ENCODE measurements at regions of chr2 and their contacts with region 1.

Region 1: DNA sequence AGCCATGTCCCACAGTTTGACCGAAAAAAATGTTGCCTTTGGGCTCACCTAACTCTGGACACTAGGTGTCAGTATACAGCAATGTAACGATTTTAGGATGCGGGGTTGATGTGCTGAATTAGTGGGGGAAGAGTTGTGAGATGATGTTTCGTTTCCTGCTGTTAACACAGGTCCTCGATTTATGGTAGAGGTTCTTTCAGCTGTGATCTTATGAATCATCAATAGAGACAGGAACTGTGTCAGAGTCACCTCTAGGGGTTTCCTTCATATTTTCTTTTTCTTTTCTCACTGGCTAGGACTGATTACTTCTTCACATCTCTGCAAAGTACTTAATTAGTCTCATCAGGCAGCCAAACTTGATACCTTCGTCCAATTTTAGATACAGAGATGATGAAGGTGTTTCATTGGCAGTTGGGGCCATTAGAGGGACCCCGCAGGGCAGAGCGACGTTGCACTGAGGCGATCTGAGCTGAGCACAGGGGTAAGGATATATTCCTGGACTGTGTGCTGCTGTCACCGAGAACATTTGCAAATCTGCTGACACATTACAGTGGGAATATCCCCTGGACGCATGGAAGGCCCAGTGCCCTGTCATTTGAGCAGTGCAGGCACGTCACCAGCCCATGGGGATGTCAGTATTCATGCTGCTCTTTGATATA is 10.2 kb upstream of the MMADHC start:
- DNase-seq: no peak

Region 2: DNA sequence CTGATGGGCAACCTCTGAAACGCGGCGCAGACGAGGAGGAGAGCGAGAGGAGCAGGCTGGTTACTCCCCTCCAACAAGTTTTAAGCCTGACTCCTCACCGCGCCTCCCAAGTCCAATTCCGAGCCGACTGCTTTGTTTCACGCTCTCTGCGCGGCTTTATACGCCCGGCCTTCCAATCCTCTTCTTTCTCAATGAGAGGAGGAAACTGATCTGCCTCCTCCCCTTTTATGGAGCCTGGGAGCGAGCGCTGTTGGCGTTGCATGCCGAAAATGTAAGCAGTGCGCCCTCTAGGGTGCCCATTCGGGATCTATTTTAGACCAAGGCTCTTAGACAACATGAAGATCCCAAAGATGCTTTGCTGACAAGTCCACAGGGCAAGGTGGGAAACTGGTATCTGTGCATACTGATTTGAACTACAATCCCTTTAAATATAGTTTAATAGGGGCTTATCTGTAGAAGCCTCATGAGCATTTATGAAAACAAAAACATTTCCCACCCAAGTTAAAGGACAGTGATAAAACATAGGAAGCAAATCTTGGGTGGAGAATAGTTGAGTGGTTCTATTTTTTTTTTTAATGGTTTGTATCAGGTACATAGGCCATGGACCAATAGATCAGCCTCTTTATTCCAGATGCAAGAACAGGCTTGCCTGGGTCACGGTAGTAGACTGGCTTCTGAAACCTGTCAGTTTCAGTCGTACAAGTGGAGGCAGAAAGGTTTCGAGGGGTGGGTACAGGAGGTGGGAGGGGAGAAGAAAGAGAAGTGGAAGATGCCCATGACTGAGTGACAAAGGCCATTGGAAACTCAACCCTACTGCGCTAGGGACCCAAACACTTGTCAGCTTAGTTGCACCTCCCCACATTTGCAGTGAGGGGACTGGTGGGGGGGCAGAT is 890.0 kb after region 1 on chr2 and contains the start of gene RND3:
- intact Hi-C with region 1: loop called (anchors 10 kb)
- DNase-seq: peak; percentile 98
- total RNA-seq, gene RND3: 67.5 to 100 TPM

Region 3: GRCh38 chr2:151238527-151239487 is 1641.0 kb after region 1 on chr2:
- intact Hi-C with region 1: loop called in 1 of 2 experiments (anchors 10 kb)
- DNase-seq: no peak